ENCODE measurements at regions of chr7 and their contacts with region 1.

Region 1: DNA sequence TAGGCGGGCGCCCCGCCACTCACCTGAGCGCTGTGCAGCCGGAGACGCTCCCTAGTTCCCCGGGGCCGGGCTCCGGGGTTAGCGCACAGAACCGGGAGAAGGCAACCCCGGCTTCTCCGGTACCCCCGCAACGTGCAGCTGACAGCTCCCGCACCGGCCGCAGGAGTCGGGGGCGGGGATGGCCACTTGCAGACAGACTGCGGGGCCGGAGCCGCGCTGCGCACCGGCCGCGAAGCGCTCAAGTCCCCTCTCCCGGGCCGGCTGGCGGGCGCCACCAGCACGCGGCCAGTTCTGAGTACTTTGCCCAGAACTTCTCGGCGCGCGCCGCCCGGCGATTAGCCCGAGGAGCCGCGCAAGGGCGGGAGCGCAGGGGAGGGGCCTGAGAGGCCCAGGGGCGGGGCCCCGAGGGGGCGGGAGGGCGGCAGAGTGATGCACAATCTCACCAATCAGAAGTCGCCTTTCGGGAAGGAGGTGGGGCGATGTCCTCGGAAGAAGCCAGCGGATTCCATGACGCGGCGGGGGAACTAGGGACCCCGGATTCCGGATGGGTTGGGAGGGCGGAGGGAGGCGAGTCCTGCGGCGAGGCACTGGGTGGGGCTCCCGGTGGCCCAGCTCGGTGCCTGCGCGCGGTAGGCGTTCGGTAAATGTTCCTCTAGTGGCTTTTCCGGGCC is at the start of gene OSBPL3:
- DNase-seq: peak; percentile 92
- ATAC-seq: peak; percentile 80
- H3K4me3 ChIP-seq: peak within 1 kb of the TSS; percentile 55 to 66
- H3K27ac ChIP-seq: peak within 1 kb of the TSS; percentile 89
- H3K4me1 ChIP-seq: peaks cover 14 to 51% of the 10 kb centered on the region in 2 experiments
- H3K27me3 ChIP-seq: no peaks in the 10 kb centered on the region
- CTCF ChIP-seq: no peak
- POLR2A ChIP-seq: peak; percentile 24
- RAD21 ChIP-seq: peak; percentile 35
- total RNA-seq, gene OSBPL3: 36.8 TPM

Region 2: DNA sequence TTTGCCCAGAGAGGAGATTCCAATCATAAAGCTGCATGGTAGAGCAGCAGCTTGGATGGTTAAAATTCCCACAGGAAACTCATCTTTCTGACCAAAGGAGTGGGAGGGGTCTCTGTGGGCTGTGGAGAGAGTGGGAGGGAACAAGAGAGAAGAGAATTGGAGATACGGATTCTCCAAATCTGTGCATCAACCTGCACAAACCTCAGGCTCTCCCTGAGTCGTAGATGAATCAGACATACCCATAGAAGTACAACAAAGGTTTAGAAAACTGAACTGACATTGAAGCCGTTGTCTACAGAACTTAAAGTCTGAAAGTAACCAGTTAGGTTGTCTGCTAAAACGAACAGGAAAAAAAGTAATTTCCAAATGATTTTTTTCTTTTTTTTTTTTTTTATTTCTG is 103.2 kb after region 1 on chr7:
- CTCF ChIA-PET with region 1: no interaction called
- POLR2A ChIA-PET with region 1: no interaction called
- RAD21 ChIA-PET with region 1: no interaction called
- intact Hi-C with region 1: no loop called
- DNase-seq: no peak
- ATAC-seq: no peak
- H3K4me3 ChIP-seq: no peak overlapping the region
- H3K27ac ChIP-seq: no peak overlapping the region
- H3K4me1 ChIP-seq: no peaks in the 10 kb centered on the region
- H3K27me3 ChIP-seq: no peaks in the 10 kb centered on the region
- CTCF ChIP-seq: no peak
- POLR2A ChIP-seq: no peak
- RAD21 ChIP-seq: no peak

Region 3: GRCh38 chr7:25862260-25863037 is 882.5 kb after region 1 on chr7:
- CTCF ChIA-PET with region 1: no interaction called
- POLR2A ChIA-PET with region 1: no interaction called
- RAD21 ChIA-PET with region 1: no interaction called
- intact Hi-C with region 1: loop called (anchors 5 kb)
- DNase-seq: peak; percentile 100
- ATAC-seq: peak; percentile 94
- H3K4me3 ChIP-seq: peak overlapping the region in 1 of 2 experiments; percentile 46; a peak in 1 of 4 replicates
- H3K27ac ChIP-seq: no peak overlapping the region
- H3K4me1 ChIP-seq: peaks cover 0 to 12% of the 10 kb centered on the region in 2 experiments; a peak in 2 of 4 replicates
- H3K27me3 ChIP-seq: peaks cover 38% of the 10 kb centered on the region
- CTCF ChIP-seq: no peak
- POLR2A ChIP-seq: no peak
- RAD21 ChIP-seq: no peak

Region 4: GRCh38 chr7:26103596-26103995 is 1123.6 kb after region 1 on chr7:
- CTCF ChIA-PET with region 1: no interaction called
- POLR2A ChIA-PET with region 1: no interaction called
- RAD21 ChIA-PET with region 1: no interaction called
- intact Hi-C with region 1: no loop called
- DNase-seq: no peak
- ATAC-seq: no peak
- H3K4me3 ChIP-seq: no peak overlapping the region
- H3K27ac ChIP-seq: no peak overlapping the region
- H3K4me1 ChIP-seq: no peaks in the 10 kb centered on the region
- H3K27me3 ChIP-seq: no peaks in the 10 kb centered on the region
- CTCF ChIP-seq: no peak
- POLR2A ChIP-seq: no peak
- RAD21 ChIP-seq: no peak

Measured in HCT116 (cell line).